ENCODE measurements at regions of chr20 and their contacts with region 1.

Region 1: DNA sequence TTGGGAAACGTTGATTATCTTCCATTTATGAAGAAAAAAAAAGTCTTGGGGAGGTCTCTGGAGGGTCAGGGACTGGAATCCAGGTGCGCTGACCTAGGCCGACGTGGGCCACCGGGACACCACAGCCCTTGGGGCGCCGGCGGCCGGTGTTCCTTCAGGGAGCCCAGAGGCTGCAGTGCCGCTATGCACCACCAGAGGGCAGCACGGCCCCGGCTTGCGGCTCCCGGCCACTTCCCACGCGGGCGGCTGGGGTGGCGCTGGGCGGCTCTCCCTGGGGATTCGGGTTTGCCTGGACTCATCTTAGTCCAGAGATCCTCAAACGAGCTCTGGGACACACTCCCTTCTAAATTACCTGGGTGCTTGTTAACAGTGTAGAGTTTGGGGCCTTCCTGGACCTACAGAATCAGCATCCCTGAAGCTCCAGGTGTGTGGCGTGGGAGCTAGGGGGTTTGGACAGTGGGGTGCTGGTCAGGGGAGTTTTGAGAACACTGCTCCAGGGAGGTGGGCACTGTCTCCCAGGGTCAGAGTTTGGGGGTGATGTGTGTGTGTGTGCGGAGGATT is 23.0 kb upstream of the GTSF1L start:
- DNase-seq: peak; percentile 83
- ATAC-seq: peak; percentile 53

Region 2: GRCh38 chr20:43812151-43812550 is 62.3 kb after region 1 on chr20:
- intact Hi-C with region 1: no loop called
- DNase-seq: no peak
- ATAC-seq: no peak

Region 3: DNA sequence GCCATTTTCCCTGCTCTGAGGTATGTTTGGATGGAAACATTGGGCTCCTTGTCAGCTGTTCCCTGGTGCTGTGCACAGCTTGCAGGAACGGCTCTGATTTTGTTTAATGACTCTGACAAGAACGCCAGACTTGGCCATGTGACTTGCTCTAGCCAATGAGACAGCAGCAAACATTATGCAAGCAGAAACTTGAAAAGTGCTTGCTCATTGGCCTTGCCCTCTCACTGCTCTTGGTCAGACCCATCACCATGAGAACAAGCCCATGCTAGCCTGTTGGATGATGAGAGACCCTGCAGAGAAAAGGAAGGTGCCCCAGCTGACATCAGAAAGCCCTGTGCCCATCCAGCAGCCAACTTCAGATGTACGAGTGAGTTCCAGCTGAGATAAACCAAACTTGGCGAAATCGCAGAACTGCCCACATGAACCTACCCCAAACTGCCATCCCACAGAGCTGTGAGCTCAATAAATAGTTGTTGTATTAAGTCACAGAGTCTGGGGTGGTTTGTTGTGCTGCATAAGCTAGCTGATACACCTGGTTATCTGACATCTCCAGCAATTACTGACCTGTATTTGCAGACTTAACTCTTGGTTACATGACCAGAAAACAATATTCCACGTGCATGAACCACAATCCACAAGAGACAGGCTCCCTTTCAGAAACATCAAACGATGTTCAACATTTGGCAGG is 340.3 kb after region 1 on chr20:
- intact Hi-C with region 1: loop called (anchors 5 kb)
- DNase-seq: peak; percentile 15
- ATAC-seq: no peak